ENCODE measurements at regions of chr14 and their contacts with region 1.

Region 1: DNA sequence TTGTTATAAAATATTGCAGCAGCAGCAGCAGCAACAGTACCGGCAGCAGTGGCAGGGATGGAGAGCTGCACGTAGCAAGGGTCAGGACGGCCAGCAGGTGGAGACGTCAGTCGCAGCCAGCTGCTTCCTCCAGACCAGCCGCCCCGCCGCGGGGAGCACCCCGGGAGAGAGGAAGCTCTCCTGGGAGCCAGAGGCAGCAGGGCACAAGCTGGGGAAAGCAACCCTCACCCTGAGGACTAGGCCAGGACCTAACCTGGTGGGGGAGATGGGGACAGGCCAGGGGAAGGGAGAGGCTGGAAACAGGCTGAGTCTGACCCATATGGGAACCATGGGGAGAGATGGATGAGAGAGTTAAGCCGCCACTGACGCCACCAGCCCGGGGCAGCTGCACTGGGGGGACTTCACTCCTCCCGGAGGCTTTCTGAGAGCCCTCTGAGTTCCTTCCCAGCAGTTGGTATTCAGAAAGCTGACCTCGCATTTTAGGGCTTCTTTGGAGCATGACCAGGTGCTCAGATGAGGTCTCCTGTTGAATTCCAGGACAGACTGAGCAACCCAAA is 56.3 kb downstream of the SPTB start:
- DNase-seq: peak; percentile 89
- H3K4me3 ChIP-seq: no peak overlapping the region; a peak in 1 of 4 replicates
- H3K27ac ChIP-seq: no peak overlapping the region
- H3K4me1 ChIP-seq: peaks cover 0 to 22% of the 10 kb centered on the region in 2 experiments; a peak in 1 of 4 replicates
- H3K27me3 ChIP-seq: no peaks in the 10 kb centered on the region
- CTCF ChIP-seq: peak; percentile 78
- EP300 ChIP-seq: no peak
- RAD21 ChIP-seq: peak; percentile 80

Region 2: GRCh38 chr14:64764641-64765520 is 58.5 kb before region 1 on chr14:
- CTCF ChIA-PET with region 1: interaction called, 13 read pairs
- POLR2A ChIA-PET with region 1: no interaction called
- DNase-seq: peak; percentile 90
- H3K4me3 ChIP-seq: peak overlapping the region; percentile 22 to 56; a peak in 1 of 4 replicates
- H3K27ac ChIP-seq: peak overlapping the region in 1 of 2 experiments; percentile 99; a peak in 2 of 4 replicates
- H3K4me1 ChIP-seq: peaks cover 26 to 56% of the 10 kb centered on the region in 2 experiments
- H3K27me3 ChIP-seq: no peaks in the 10 kb centered on the region
- CTCF ChIP-seq: peak; percentile 81
- EP300 ChIP-seq: no peak
- RAD21 ChIP-seq: peak; percentile 87

Region 3: GRCh38 chr14:64778104-64778754 is 45.2 kb before region 1 on chr14:
- CTCF ChIA-PET with region 1: interaction called, 13 read pairs
- POLR2A ChIA-PET with region 1: no interaction called
- DNase-seq: no peak
- H3K4me3 ChIP-seq: no peak overlapping the region
- H3K27ac ChIP-seq: no peak overlapping the region
- H3K4me1 ChIP-seq: peaks cover 0 to 6% of the 10 kb centered on the region in 2 experiments; a peak in 1 of 4 replicates
- H3K27me3 ChIP-seq: no peaks in the 10 kb centered on the region
- CTCF ChIP-seq: no peak
- EP300 ChIP-seq: no peak
- RAD21 ChIP-seq: no peak

Region 4: GRCh38 chr14:64812217-64812811 is 11.1 kb before region 1 on chr14:
- CTCF ChIA-PET with region 1: interaction called, 20 read pairs
- POLR2A ChIA-PET with region 1: no interaction called
- DNase-seq: no peak
- H3K4me3 ChIP-seq: no peak overlapping the region
- H3K27ac ChIP-seq: no peak overlapping the region
- H3K4me1 ChIP-seq: peaks cover 4 to 6% of the 10 kb centered on the region in 2 experiments; a peak in 3 of 4 replicates
- H3K27me3 ChIP-seq: no peaks in the 10 kb centered on the region
- CTCF ChIP-seq: no peak
- EP300 ChIP-seq: no peak
- RAD21 ChIP-seq: no peak

Region 5: DNA sequence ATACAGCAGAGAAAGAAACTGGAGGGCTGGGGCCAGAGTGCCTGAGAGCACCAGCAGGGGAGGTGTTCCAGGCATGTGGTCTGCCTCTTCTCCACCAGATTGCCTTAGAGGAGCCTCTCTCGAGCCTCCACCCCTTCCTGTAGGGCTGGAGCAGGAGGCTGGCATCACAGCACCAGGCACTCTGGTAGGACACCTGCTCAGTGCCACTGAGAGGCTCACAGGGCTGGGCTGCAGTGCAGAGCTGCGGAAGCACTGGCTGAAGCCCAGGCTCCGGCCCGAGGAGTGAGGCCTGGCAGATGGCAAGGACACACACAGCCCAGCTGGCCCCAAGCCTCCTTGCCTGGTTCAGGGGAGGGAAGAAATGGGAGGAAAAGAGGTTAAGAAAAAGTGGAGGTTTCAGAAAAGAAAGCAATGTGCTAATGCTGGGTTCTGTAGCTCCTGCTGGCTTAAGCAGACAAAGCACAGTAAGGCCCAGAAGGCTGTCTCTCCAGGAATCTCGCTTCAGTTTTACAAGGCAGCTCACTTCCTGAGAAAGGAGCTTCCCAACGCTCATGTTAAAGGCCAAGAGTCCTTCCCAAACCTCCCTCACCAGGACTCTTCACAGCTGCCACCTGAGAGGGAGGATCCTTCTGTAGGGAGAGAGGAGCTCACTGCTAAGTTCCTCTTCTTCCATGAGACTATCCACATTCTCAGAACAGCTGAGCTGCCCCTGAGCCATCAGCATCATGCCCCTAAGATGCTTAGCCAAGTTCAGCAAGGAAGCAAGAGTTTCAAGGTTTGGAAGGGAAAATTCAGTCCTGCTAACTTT is 32.5 kb after region 1 on chr14:
- CTCF ChIA-PET with region 1: interaction called, 16 read pairs
- POLR2A ChIA-PET with region 1: no interaction called
- DNase-seq: no peak
- H3K4me3 ChIP-seq: no peak overlapping the region
- H3K27ac ChIP-seq: no peak overlapping the region
- H3K4me1 ChIP-seq: no peaks in the 10 kb centered on the region
- H3K27me3 ChIP-seq: no peaks in the 10 kb centered on the region; the same call in 1 of the 2 replicates
- CTCF ChIP-seq: no peak
- EP300 ChIP-seq: no peak
- RAD21 ChIP-seq: no peak

Region 6: DNA sequence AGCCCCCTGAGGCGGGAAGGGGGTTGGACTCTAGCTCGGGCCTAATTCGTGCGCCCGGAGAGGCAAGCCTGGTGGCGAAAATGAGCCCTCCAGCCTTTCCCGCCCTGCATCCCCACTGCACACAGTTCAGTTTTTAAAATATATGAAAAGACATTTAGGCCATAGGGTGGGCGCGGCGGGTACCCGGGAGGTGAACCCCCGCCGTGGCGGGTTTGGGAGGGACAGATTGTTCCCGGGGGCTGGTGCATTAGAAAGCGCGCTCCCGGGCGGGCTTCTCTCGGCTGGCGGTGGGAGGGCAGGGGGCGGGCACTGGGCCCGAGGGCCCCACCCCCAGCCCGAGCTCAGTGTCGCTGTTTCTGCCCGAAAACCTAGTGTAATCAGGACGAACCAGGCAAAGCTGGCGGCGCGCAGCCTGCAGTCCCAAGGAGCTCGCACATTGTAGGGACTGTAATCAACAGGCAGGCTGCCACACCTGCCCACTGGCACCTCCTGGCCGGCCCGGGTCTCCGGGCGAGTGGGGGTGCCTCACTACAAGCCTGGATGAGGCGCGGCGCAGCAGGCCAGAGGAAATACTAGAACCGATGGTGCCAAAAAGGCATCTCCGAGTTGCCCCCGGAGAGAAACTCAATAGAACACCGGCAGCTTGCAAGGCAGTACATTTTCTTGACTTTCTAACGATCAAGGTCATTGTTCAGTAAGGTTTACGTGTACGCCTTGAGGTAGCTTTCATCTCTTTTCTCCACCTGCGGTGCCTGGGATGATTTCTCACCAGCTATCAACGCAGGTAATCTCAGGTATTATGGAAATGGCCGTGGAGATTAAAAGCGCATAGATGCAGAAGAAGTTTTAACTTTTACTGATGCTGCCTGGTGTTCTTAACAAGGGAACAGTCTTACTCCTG is 57.1 kb after region 1 on chr14:
- CTCF ChIA-PET with region 1: interaction called, 49 read pairs
- POLR2A ChIA-PET with region 1: interaction called, 9 read pairs
- DNase-seq: peak; percentile 89
- H3K4me3 ChIP-seq: peak overlapping the region; percentile 54 to 60
- H3K27ac ChIP-seq: peak overlapping the region in 1 of 2 experiments; percentile 55; a peak in 2 of 4 replicates
- H3K4me1 ChIP-seq: peaks cover 0 to 17% of the 10 kb centered on the region in 2 experiments; a peak in 2 of 4 replicates
- H3K27me3 ChIP-seq: peaks cover 44% of the 10 kb centered on the region
- CTCF ChIP-seq: no peak
- EP300 ChIP-seq: no peak
- RAD21 ChIP-seq: no peak

Region 7: DNA sequence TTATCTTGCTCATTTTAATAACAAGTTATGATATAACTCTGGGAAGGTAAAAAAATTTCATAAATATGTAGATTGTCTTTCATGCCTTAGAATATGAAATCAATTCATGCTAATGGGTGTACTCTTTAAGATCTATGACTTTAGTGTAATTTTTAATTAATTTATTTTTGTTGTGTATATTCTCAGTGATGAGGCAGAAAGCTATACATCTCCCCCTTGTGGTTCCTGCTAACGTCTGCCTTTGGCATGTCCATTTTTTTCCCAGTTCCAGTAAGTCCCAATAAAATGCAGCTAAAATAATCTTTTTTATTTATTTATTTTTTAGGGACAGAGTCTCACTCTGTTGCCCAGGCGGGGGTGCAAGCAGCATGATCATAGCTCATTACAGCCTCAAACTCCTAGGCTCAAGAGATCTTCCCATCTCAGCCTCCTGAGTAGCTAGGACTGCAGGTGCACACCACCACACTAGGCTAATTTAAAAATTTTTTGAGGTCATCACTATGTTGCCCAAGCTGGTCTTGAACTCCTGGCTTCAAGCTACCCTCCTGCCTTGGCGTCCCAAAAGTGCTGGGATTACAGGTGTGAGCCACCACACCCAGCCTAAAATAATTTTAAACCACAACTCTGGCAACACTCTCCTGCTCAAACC is 87.6 kb after region 1 on chr14:
- CTCF ChIA-PET with region 1: interaction called, 18 read pairs
- POLR2A ChIA-PET with region 1: no interaction called
- DNase-seq: peak; percentile 35
- H3K4me3 ChIP-seq: no peak overlapping the region
- H3K27ac ChIP-seq: no peak overlapping the region
- H3K4me1 ChIP-seq: peaks cover 0 to 9% of the 10 kb centered on the region in 2 experiments; a peak in 2 of 4 replicates
- H3K27me3 ChIP-seq: no peaks in the 10 kb centered on the region
- CTCF ChIP-seq: peak; percentile 87
- EP300 ChIP-seq: no peak
- RAD21 ChIP-seq: peak; percentile 67

Measured in SK-N-SH (cell line).